ENCODE measurements at regions of chr17 and their contacts with region 1.

Region 1: DNA sequence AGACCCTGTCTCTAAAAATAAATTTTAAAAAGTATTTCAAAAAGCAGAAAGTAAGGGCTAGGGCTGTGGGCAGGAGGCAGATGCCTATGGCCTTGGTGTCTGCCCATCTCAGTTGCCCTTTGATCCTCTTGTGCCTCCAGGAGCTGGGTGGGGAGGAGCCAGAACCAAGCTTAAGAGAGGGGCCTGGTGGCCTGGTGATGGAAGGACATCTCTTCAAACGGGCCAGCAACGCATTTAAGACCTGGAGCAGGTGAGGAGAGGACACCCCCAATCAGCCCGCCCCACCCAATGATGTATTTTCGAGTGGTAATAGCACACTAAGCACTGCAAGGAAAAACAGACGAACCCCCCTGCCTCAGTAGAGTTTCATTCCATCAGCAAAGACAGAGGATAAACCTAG is 7.6 kb upstream of the KCTD11 start:
- DNase-seq: no peak
- ATAC-seq: no peak
- H3K4me3 ChIP-seq: no peak overlapping the region
- H3K27ac ChIP-seq: no peak overlapping the region
- H3K4me1 ChIP-seq: peaks cover 0 to 8% (median 5%) of the 10 kb centered on the region in 12 donors
- H3K27me3 ChIP-seq: peaks cover 0 to 27% (median 0%) of the 10 kb centered on the region in 9 donors
- CTCF ChIP-seq: no peak
- POLR2A ChIP-seq: no peak

Region 2: GRCh38 chr17:7261172-7261927 is 83.0 kb before region 1 on chr17:
- intact Hi-C with region 1: no loop called
- DNase-seq: peak in 1 of 5 donors; percentile 43
- ATAC-seq: peak in 2 of 4 donors; percentile 60
- H3K4me3 ChIP-seq: peak overlapping the region; percentile 9 to 64 (median 52)
- H3K27ac ChIP-seq: peak overlapping the region in 2 of 12 donors; percentile 19 to 33
- H3K4me1 ChIP-seq: peaks cover 0 to 36% (median 23%) of the 10 kb centered on the region in 12 donors
- H3K27me3 ChIP-seq: peaks cover 18 to 50% (median 36%) of the 10 kb centered on the region in 9 donors
- CTCF ChIP-seq: no peak
- POLR2A ChIP-seq: no peak

Region 3: DNA sequence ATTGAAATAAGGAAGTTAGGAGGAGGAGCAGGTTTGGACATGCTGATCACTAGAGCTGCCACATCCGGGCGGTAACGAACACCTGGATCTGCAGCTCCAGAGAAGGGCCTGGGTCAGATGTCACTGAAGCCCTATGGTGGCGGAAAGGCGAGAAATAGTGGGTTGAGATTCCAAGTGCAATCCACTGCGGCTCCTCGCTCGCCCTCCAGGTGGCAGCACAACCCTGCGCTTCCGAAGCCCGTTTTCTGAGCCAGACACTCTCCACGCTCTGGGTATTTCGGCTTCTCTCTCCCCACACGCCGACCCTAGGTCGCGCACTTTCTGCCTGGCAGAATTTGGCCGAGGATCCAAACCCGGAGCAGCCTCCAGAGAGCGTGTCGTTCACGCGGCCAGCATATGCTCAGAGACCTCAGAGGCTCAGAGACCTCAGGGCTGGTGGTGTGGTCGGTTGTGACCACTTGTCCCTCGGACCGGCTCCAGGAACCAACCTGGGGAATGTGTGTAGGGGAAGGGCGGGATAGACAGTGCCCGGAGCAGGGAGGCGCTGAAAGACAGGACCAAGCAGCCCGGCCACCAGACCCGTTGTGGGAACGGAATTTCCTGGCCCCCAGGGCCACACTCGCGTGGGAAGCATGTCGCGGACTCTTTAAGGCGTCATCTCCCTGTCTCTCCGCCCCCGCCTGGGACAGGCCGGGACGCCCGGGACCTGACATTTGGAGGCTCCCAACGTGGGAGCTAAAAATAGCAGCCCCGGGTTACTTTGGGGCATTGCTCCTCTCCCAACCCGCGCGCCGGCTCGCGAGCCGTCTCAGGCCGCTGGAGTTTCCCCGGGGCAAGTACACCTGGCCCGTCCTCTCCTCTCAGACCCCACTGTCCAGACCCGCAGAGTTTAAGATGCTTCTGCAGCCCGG is 63.6 kb before region 1 on chr17:
- intact Hi-C with region 1: loop called (anchors 1 to 10 kb)
- DNase-seq: peak; percentile 86 to 94 (median 90)
- ATAC-seq: peak; percentile 69 to 77 (median 72)
- H3K4me3 ChIP-seq: peak overlapping the region in 11 of 12 donors; percentile 26 to 76 (median 65)
- H3K27ac ChIP-seq: peak overlapping the region; percentile 90 to 99 (median 96)
- H3K4me1 ChIP-seq: peaks cover 4 to 49% (median 21%) of the 10 kb centered on the region in 12 donors
- H3K27me3 ChIP-seq: peaks cover 0 to 24% (median 3%) of the 10 kb centered on the region in 9 donors
- CTCF ChIP-seq: peak; percentile 84 to 97 (median 94)
- POLR2A ChIP-seq: no peak

Region 4: DNA sequence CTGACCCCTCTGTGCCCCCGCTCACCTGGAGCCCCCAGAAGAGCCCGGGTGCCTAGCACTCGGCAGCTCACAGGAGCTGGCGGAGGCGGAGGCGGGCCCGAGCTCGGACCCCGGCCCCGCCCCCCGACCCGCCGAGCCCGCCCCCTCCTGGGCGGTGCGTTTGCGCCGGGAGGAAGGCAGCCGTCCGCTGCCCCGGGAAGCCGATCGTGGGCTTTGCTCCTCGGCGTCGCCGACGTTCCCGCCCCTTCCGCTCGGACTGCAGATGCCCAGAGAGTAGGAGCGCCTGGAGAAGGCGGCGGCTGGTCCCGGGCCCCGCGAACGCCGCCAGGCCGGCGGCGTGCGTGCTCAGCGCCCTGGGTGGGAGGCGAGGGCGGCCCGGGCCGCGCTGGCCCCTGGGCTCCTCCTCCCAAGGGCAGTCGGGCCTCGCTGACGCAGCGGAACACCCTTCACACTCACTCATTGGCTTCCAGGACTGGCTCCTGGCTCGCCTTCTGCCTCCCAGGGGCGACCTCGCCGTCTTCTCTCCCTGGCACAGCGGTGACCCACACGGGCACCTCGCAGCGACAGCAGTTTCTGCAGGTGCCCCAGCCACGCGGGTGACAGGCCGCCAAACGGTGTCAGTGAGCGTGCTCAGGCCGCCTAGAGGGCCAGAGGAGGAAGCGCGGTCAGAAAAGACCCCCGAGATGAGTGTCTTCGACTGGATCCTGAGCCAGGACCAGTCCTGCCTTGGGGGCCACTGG is 50.2 kb after region 1 on chr17 and contains the start of gene PLSCR3:
- intact Hi-C with region 1: no loop called
- DNase-seq: peak; percentile 88 to 94 (median 93)
- ATAC-seq: peak; percentile 75 to 94 (median 93)
- H3K4me3 ChIP-seq: peak within 1 kb of the TSS; percentile 76 to 96 (median 86)
- H3K27ac ChIP-seq: peak within 1 kb of the TSS; percentile 88 to 99 (median 96)
- H3K4me1 ChIP-seq: peaks cover 0 to 27% (median 17%) of the 10 kb centered on the region in 12 donors
- H3K27me3 ChIP-seq: no peaks in the 10 kb centered on the region
- CTCF ChIP-seq: peak in 8 of 12 donors; percentile 9 to 45 (median 31)
- POLR2A ChIP-seq: peak; percentile 50 to 93
- total RNA-seq, gene PLSCR3: 14.3 to 29.5 (median 16.4) TPM

Region 5: GRCh38 chr17:7454980-7455379 is 110.6 kb after region 1 on chr17:
- intact Hi-C with region 1: no loop called
- DNase-seq: peak in 1 of 5 donors; percentile 27
- ATAC-seq: peak in 1 of 4 donors; percentile 4
- H3K4me3 ChIP-seq: peak overlapping the region in 10 of 12 donors; percentile 42 to 98 (median 85)
- H3K27ac ChIP-seq: peak overlapping the region in 4 of 12 donors; percentile 75 to 86 (median 79)
- H3K4me1 ChIP-seq: peaks cover 0 to 13% (median 5%) of the 10 kb centered on the region in 12 donors
- H3K27me3 ChIP-seq: no peaks in the 10 kb centered on the region
- CTCF ChIP-seq: no peak
- POLR2A ChIP-seq: no peak

Region 6: GRCh38 chr17:7502987-7503386 is 158.6 kb after region 1 on chr17:
- intact Hi-C with region 1: no loop called
- DNase-seq: no peak
- ATAC-seq: peak in 1 of 4 donors; percentile 33
- H3K4me3 ChIP-seq: no peak overlapping the region
- H3K27ac ChIP-seq: no peak overlapping the region
- H3K4me1 ChIP-seq: peaks cover 0 to 4% (median 0%) of the 10 kb centered on the region in 12 donors
- H3K27me3 ChIP-seq: no peaks in the 10 kb centered on the region
- CTCF ChIP-seq: peak in 4 of 12 donors; percentile 10 to 31 (median 16)
- POLR2A ChIP-seq: no peak